ENCODE measurements at regions of chr16 and their contacts with region 1.

Region 1: GRCh38 chr16:78227855-78228254 is 128.4 kb downstream of the WWOX start:
- DNase-seq: peak; percentile 53 to 56
- H3K4me3 ChIP-seq: no peak overlapping the region
- H3K4me3 Mint-ChIP-seq: no peak overlapping the region
- H3K27ac Mint-ChIP-seq: peak overlapping the region; percentile 28
- H3K4me1 ChIP-seq: peaks cover 17% of the 10 kb centered on the region
- H3K4me1 Mint-ChIP-seq: peaks cover 18% of the 10 kb centered on the region
- H3K27me3 ChIP-seq: no peaks in the 10 kb centered on the region
- H3K27me3 Mint-ChIP-seq: no peaks in the 10 kb centered on the region
- CTCF ChIP-seq: peak; percentile 23 to 35

Region 2: GRCh38 chr16:77877712-77878347 is 350.0 kb before region 1 on chr16:
- CTCF ChIA-PET with region 1: no interaction called
- POLR2A ChIA-PET with region 1: no interaction called
- intact Hi-C with region 1: no loop called
- DNase-seq: no peak
- H3K4me3 ChIP-seq: no peak overlapping the region
- H3K4me3 Mint-ChIP-seq: no peak overlapping the region
- H3K27ac Mint-ChIP-seq: no peak overlapping the region
- H3K4me1 ChIP-seq: no peaks in the 10 kb centered on the region
- H3K4me1 Mint-ChIP-seq: no peaks in the 10 kb centered on the region
- H3K27me3 ChIP-seq: no peaks in the 10 kb centered on the region
- H3K27me3 Mint-ChIP-seq: peaks cover 8% of the 10 kb centered on the region
- CTCF ChIP-seq: no peak

Region 3: DNA sequence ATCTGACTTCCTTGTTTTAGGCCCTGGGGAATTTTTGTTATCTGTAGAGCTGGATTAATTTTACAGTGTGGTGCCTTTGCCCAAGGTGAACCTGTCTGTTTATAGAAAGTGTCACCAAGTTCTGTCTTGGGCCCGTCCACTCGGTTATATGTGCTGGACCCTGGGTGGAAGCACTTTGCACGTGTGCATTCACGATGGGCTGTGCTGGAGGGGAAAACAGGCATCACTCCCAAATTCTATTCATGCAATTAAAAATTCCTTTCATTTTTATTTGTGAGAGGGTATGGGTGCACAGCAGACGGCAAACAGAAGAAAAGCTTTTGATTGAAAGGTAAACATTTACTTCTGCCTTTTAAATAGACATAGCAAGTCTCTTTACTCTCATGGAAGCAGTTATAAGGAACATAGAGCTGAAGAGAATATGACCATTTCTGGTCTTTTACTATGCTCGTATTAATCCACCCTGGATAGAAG is 27.2 kb before region 1 on chr16:
- CTCF ChIA-PET with region 1: no interaction called
- POLR2A ChIA-PET with region 1: no interaction called
- intact Hi-C with region 1: loop called (anchors 1 kb)
- DNase-seq: peak; percentile 44 to 51
- H3K4me3 ChIP-seq: no peak overlapping the region
- H3K4me3 Mint-ChIP-seq: peak overlapping the region; percentile 55
- H3K27ac Mint-ChIP-seq: peak overlapping the region; percentile 97
- H3K4me1 ChIP-seq: peaks cover 40% of the 10 kb centered on the region
- H3K4me1 Mint-ChIP-seq: peaks cover 47% of the 10 kb centered on the region
- H3K27me3 ChIP-seq: no peaks in the 10 kb centered on the region
- H3K27me3 Mint-ChIP-seq: no peaks in the 10 kb centered on the region
- CTCF ChIP-seq: no peak

Region 4: GRCh38 chr16:78209951-78210661 is 17.7 kb before region 1 on chr16:
- CTCF ChIA-PET with region 1: no interaction called
- POLR2A ChIA-PET with region 1: interaction called, 4 read pairs
- intact Hi-C with region 1: loop called (anchors 1 kb)
- DNase-seq: peak in 1 of 2 experiments; percentile 20
- H3K4me3 ChIP-seq: no peak overlapping the region
- H3K4me3 Mint-ChIP-seq: no peak overlapping the region
- H3K27ac Mint-ChIP-seq: peak overlapping the region; percentile 92
- H3K4me1 ChIP-seq: peaks cover 45% of the 10 kb centered on the region
- H3K4me1 Mint-ChIP-seq: peaks cover 49% of the 10 kb centered on the region
- H3K27me3 ChIP-seq: no peaks in the 10 kb centered on the region
- H3K27me3 Mint-ChIP-seq: no peaks in the 10 kb centered on the region
- CTCF ChIP-seq: no peak

Region 5: DNA sequence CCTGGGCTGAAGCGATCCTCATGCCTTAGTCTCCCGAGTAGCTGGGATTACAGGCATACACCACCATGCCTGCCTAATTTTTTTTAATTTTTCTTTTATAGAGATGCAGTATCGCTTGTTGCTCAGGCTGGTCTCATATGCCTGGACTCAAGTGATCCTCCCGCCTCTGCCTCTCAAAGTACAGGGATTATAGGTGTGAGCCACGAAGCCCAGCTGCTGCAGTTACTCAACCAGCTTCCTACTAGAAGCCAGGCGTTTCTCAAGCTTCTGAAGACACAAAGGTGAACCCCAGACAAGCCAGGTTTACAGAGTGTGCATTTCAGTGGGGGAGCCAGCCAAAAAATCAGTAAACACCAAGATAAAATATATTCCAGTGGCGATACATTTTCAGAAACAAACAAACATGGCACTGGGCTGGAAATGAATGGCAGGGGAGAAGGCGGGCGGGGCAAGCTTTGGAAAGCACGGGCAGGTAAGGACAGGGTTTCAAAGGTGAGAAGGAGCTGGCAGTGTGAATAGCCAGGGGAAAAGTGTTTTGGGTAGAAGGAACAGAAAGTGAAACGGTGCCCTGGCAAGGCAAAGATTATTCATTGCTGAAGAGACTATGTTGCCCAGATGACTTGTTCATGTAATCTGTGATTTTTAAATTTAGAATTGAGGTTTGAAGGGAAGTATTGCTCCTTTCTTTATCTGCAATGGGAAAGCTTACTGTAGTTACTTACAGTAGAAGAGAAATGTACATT is 342.7 kb after region 1 on chr16:
- CTCF ChIA-PET with region 1: no interaction called
- POLR2A ChIA-PET with region 1: no interaction called
- intact Hi-C with region 1: loop called (anchors 5 kb)
- DNase-seq: no peak
- H3K4me3 ChIP-seq: no peak overlapping the region
- H3K4me3 Mint-ChIP-seq: no peak overlapping the region
- H3K27ac Mint-ChIP-seq: no peak overlapping the region
- H3K4me1 ChIP-seq: no peaks in the 10 kb centered on the region
- H3K4me1 Mint-ChIP-seq: no peaks in the 10 kb centered on the region
- H3K27me3 ChIP-seq: no peaks in the 10 kb centered on the region
- H3K27me3 Mint-ChIP-seq: no peaks in the 10 kb centered on the region
- CTCF ChIP-seq: no peak

Measured in Caco-2 (cell line).